ENCODE measurements at regions of chr4 and their contacts with region 1.

Region 1: GRCh38 chr4:102620697-102621497 is 119.7 kb downstream of the NFKB1 start:
- DNase-seq: peak in 1 of 9 experiments; percentile 56
- ATAC-seq: peak; percentile 50
- H3K4me3 ChIP-seq: no peak overlapping the region
- H3K4me3 Mint-ChIP-seq: no peak overlapping the region
- H3K27ac ChIP-seq: no peak overlapping the region
- H3K27ac Mint-ChIP-seq: peak overlapping the region; percentile 53
- H3K4me1 ChIP-seq: peaks cover 28% of the 10 kb centered on the region
- H3K4me1 Mint-ChIP-seq: peaks cover 46% of the 10 kb centered on the region
- H3K27me3 ChIP-seq: no peaks in the 10 kb centered on the region
- H3K27me3 Mint-ChIP-seq: no peaks in the 10 kb centered on the region
- CTCF ChIP-seq: peak; percentile 26

Region 2: GRCh38 chr4:102390438-102390837 is 230.5 kb before region 1 on chr4:
- CTCF ChIA-PET with region 1: no interaction called
- POLR2A ChIA-PET with region 1: no interaction called
- intact Hi-C with region 1: no loop called
- DNase-seq: peak in 2 of 9 experiments; percentile 2 to 26
- ATAC-seq: peak; percentile 38
- H3K4me3 ChIP-seq: no peak overlapping the region
- H3K4me3 Mint-ChIP-seq: no peak overlapping the region
- H3K27ac ChIP-seq: no peak overlapping the region
- H3K27ac Mint-ChIP-seq: no peak overlapping the region
- H3K4me1 ChIP-seq: no peaks in the 10 kb centered on the region
- H3K4me1 Mint-ChIP-seq: no peaks in the 10 kb centered on the region
- H3K27me3 ChIP-seq: no peaks in the 10 kb centered on the region
- H3K27me3 Mint-ChIP-seq: peaks cover 9% of the 10 kb centered on the region
- CTCF ChIP-seq: no peak

Region 3: GRCh38 chr4:102449751-102450352 is 171.0 kb before region 1 on chr4:
- CTCF ChIA-PET with region 1: interaction called, 37 read pairs
- POLR2A ChIA-PET with region 1: no interaction called
- intact Hi-C with region 1: loop called (anchors 1 kb)
- DNase-seq: peak; percentile 21 to 82 (median 48)
- ATAC-seq: peak; percentile 89
- H3K4me3 ChIP-seq: no peak overlapping the region
- H3K4me3 Mint-ChIP-seq: no peak overlapping the region
- H3K27ac ChIP-seq: no peak overlapping the region
- H3K27ac Mint-ChIP-seq: no peak overlapping the region
- H3K4me1 ChIP-seq: no peaks in the 10 kb centered on the region
- H3K4me1 Mint-ChIP-seq: peaks cover 10% of the 10 kb centered on the region
- H3K27me3 ChIP-seq: no peaks in the 10 kb centered on the region
- H3K27me3 Mint-ChIP-seq: no peaks in the 10 kb centered on the region
- CTCF ChIP-seq: peak; percentile 83

Region 4: GRCh38 chr4:102610007-102610406 is 10.9 kb before region 1 on chr4:
- CTCF ChIA-PET with region 1: interaction called, 25 read pairs
- POLR2A ChIA-PET with region 1: interaction called, 3 read pairs
- intact Hi-C with region 1: loop called in 1 of 2 experiments (anchors 1 kb)
- DNase-seq: peak in 1 of 9 experiments; percentile 41
- ATAC-seq: no peak
- H3K4me3 ChIP-seq: no peak overlapping the region
- H3K4me3 Mint-ChIP-seq: no peak overlapping the region
- H3K27ac ChIP-seq: peak overlapping the region in 1 of 2 experiments; percentile 90
- H3K27ac Mint-ChIP-seq: peak overlapping the region; percentile 39
- H3K4me1 ChIP-seq: peaks cover 67% of the 10 kb centered on the region
- H3K4me1 Mint-ChIP-seq: peaks cover 78% of the 10 kb centered on the region
- H3K27me3 ChIP-seq: no peaks in the 10 kb centered on the region
- H3K27me3 Mint-ChIP-seq: no peaks in the 10 kb centered on the region
- CTCF ChIP-seq: no peak

Region 5: DNA sequence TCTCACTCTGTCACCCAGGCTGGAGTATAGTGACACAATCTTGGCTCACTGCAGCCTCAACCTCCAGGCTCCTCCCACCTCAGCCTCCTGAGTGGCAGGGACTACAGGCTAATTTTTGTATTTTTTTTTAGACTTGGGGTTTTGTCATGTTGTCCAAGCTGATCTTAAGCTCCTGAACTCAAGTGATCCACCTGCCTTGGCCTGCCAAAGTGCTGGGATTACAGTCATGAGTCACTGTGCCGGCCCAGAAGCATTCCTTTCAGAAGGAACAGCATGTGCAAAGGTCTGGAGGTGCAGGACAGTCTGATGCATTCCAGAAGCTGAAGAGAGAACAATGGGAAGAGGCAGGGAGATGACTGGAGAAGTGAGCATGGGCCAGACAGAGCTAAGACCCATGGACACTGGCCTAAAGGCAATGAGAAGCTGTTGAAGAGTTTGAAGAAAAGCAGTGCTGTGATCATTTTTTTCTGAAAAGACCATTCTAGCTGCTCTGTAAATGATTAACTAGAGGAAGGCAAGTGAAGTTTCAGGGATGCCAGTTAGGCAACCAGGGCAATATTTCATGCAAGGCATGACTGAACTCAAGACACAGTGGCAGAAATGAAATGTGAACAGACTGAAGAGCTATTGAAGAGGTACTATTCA is 96.7 kb after region 1 on chr4:
- CTCF ChIA-PET with region 1: no interaction called
- POLR2A ChIA-PET with region 1: no interaction called
- intact Hi-C with region 1: no loop called
- DNase-seq: no peak
- ATAC-seq: no peak
- H3K4me3 ChIP-seq: no peak overlapping the region
- H3K4me3 Mint-ChIP-seq: no peak overlapping the region
- H3K27ac ChIP-seq: no peak overlapping the region
- H3K27ac Mint-ChIP-seq: no peak overlapping the region
- H3K4me1 ChIP-seq: no peaks in the 10 kb centered on the region
- H3K4me1 Mint-ChIP-seq: no peaks in the 10 kb centered on the region
- H3K27me3 ChIP-seq: no peaks in the 10 kb centered on the region
- H3K27me3 Mint-ChIP-seq: no peaks in the 10 kb centered on the region
- CTCF ChIP-seq: no peak

Region 6: DNA sequence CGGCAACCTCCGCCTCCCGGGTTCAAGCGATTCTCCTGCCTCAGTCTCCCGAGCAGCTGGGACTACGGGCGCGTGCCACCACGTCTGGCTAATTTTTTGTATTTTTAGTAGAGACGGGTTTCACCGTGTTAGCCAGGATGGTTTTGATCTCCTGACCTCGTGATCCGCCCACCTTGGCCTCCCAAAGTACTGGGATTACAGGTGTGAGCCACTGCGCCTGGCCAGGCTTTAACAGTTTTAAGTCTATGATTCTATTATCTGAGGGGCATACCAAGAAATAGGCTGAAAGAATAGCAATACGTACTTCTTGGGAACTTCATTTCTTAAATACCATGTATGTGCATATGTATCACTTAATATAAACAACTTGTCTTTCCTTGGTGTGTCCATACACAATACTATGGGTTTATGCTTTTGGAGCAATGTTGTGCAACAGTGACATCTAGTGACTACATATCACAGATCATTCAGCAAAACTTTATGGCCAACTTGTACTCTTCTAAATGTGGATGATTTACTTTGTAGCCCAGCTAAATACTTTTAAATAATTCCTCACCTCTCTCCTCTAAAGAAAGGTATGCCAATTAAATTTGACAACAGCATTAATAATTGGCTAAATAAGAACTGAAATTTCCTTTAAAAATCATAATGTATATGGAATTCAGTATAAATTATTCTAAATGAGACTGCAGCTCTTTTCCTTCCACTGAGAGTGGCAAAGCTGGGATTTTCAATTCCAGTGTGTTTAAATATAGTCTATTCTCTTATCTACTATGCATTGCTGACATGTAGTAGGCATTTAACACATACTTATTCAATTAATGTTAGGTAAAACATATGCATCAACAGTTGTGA is 388.2 kb after region 1 on chr4:
- CTCF ChIA-PET with region 1: interaction called, 14 read pairs
- POLR2A ChIA-PET with region 1: no interaction called
- intact Hi-C with region 1: loop called (anchors 1 to 2 kb)
- DNase-seq: peak in 3 of 9 experiments; percentile 19 to 82 (median 75)
- ATAC-seq: peak; percentile 97
- H3K4me3 ChIP-seq: no peak overlapping the region
- H3K4me3 Mint-ChIP-seq: no peak overlapping the region
- H3K27ac ChIP-seq: no peak overlapping the region
- H3K27ac Mint-ChIP-seq: no peak overlapping the region
- H3K4me1 ChIP-seq: no peaks in the 10 kb centered on the region
- H3K4me1 Mint-ChIP-seq: peaks cover 2% of the 10 kb centered on the region
- H3K27me3 ChIP-seq: no peaks in the 10 kb centered on the region
- H3K27me3 Mint-ChIP-seq: no peaks in the 10 kb centered on the region
- CTCF ChIP-seq: peak; percentile 85